Activated T-helper 1 cell treated with anti-CD3 and anti-CD28 coated beads, Interleukin-12 subunit alpha, Interleukin-12 subunit beta, Interleukin-2, Interleukin-4 antibody, amounts not matched to agents 30 ng/mL and 10 ng/mL and 1 ng/mL, durations not matched to agents 14 hours and 24 hours and 36 hours (primary cell): ENCODE measurements at regions of chr2 and their contacts with region 1.

Region 1: GRCh38 chr2:196849895-196850294 is 40.7 kb upstream of the C2orf66 start:
- DNase-seq: no peak
- H3K4me3 Mint-ChIP-seq: no peak overlapping the region
- H3K27ac Mint-ChIP-seq: peak overlapping the region; percentile 6
- H3K4me1 Mint-ChIP-seq: peaks cover 33% of the 10 kb centered on the region
- H3K27me3 Mint-ChIP-seq: no peaks in the 10 kb centered on the region

Region 2: GRCh38 chr2:197399887-197400540 is 550.1 kb after region 1 on chr2:
- intact Hi-C with region 1: loop called (anchors 10 kb)
- DNase-seq: no peak
- H3K4me3 Mint-ChIP-seq: no peak overlapping the region
- H3K27ac Mint-ChIP-seq: no peak overlapping the region
- H3K4me1 Mint-ChIP-seq: no peaks in the 10 kb centered on the region
- H3K27me3 Mint-ChIP-seq: no peaks in the 10 kb centered on the region